Motor neuron (in vitro differentiated cells): ENCODE measurements at regions of chr7 and their contacts with region 1.

Region 1: DNA sequence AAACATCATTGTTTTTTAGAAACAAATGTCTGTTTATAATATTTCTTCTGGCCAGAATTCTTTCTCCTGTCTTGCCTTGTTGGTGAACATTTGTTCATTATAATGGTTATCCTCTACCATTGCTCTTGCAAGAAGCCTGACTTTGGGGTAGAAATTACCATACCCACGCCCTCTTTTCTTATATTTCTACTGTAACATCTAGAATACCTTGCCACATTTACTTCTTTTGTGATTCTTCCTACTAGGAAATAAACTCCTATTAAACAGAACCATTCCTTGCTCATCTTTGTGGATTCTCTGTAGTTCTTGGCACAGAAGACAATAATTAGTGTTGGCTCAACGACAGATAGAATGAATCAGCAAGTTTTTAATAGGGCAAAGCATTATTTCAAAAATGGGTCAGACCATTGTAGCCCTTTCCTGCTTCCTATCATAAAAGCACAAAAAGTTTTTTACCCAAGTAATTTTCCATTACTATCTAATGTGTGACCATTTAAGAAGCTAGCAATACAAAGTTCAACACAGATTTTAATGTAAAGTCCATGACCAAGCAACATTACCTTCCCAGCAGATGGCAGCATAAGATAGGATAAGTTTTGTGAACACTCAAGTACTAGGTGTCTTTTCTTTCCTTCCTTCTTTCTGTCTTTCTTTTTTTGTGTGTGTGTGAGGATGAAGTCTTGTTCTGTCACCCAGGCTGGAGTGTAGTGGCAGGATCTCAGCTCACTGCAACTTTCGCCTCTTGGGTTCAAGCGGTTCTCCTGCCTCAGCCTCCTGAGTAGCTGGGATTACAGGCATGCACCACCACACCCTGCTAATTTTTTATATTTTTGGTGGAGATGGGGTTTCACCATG is 270.4 kb downstream of the HGF start:
- ATAC-seq: peak; percentile 47 to 88 (median 72)
- H3K4me3 ChIP-seq: no peak overlapping the region
- H3K27ac ChIP-seq: no peak overlapping the region
- H3K4me1 ChIP-seq: peaks cover 0 to 2% of the 10 kb centered on the region in 2 donors

Region 2: DNA sequence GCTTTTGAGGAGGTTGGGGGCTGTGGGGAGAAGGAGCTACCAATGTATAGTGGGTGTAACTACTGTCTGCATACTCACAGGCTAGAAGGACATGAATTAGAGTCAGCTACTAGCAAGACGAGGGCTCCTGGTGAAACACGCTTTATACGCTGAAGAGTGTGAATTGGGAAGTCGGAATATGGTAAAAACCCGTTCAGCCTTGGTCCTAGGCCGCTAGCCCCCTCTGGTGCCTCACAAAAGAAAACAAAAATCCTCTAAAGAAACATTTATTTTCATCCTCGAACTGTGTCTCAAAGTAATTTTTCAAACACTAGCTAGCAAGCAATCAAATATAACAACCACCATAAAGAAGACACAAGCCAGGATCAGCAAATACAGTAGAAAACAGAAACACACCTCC is 242.5 kb before region 1 on chr7:
- in situ Hi-C with region 1: no loop called
- ATAC-seq: no peak
- H3K4me3 ChIP-seq: no peak overlapping the region
- H3K27ac ChIP-seq: no peak overlapping the region
- H3K4me1 ChIP-seq: no peaks in the 10 kb centered on the region

Region 3: GRCh38 chr7:81349044-81349443 is 150.4 kb before region 1 on chr7:
- in situ Hi-C with region 1: no loop called
- ATAC-seq: peak in 3 of 8 experiments; percentile 61 to 82 (median 79)
- H3K4me3 ChIP-seq: no peak overlapping the region
- H3K27ac ChIP-seq: no peak overlapping the region
- H3K4me1 ChIP-seq: no peaks in the 10 kb centered on the region

Region 4: DNA sequence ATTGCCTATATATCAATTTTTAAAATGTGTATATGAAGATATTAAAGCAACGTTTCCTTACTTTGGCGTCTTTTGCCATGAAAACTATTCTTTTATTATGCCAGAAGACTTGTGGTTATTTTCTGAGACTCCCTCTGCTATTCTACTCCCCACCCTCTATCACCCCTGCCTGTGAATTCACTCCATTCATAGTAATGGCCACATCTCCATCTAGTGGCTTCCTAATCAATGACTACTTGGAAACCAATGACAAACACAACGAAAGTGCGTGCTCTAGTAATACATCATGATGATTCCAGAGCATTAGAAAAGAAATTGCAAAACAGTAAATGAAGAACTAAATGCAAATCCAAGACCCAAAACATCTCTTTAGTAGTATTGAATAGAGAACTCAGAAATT is 457.0 kb after region 1 on chr7:
- in situ Hi-C with region 1: loop called in 1 of 9 experiments (anchors 25 kb)
- ATAC-seq: peak in 5 of 8 experiments; percentile 44 to 86 (median 69)
- H3K4me3 ChIP-seq: no peak overlapping the region
- H3K27ac ChIP-seq: no peak overlapping the region
- H3K4me1 ChIP-seq: no peaks in the 10 kb centered on the region

Region 5: GRCh38 chr7:82044497-82045080 is 545.1 kb after region 1 on chr7:
- in situ Hi-C with region 1: loop called in 1 of 9 experiments (anchors 25 kb)
- ATAC-seq: peak in 2 of 8 experiments; percentile 17 to 46
- H3K4me3 ChIP-seq: no peak overlapping the region
- H3K27ac ChIP-seq: no peak overlapping the region
- H3K4me1 ChIP-seq: no peaks in the 10 kb centered on the region

Region 6: DNA sequence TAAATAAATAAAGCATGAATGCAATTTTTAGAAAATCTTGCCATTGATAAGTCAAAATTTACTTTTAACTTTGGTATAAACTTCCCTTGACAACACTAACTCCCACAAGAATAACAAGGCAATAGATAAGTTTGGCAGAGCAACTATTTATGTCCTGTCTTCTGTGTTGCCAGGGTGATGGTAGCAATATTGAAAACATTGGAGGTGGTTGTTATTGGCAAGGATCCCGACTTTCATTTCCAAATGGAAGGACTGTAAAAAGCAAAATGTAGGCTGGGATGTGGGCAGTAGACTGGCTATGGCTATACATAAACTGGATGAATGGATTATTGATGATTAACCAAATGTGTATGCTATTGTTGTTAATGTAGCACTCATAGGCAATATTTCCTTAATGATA is 1078.9 kb after region 1 on chr7:
- in situ Hi-C with region 1: loop called in 3 of 9 experiments (anchors 25 kb)
- ATAC-seq: peak in 2 of 8 experiments; percentile 21 to 43
- H3K4me3 ChIP-seq: no peak overlapping the region
- H3K27ac ChIP-seq: no peak overlapping the region
- H3K4me1 ChIP-seq: no peaks in the 10 kb centered on the region